Tibial artery (tissue), 4 donors: ENCODE measurements at regions of chr1 and their contacts with region 1.

Region 1: GRCh38 chr1:175035865-175036264 is 12.6 kb upstream of the MRPS14 start:
- DNase-seq: no peak
- H3K4me3 ChIP-seq: no peak overlapping the region
- H3K27ac ChIP-seq: no peak overlapping the region
- H3K4me1 ChIP-seq: no peaks in the 10 kb centered on the region
- H3K27me3 ChIP-seq: no peaks in the 10 kb centered on the region
- CTCF ChIP-seq: no peak

Region 2: DNA sequence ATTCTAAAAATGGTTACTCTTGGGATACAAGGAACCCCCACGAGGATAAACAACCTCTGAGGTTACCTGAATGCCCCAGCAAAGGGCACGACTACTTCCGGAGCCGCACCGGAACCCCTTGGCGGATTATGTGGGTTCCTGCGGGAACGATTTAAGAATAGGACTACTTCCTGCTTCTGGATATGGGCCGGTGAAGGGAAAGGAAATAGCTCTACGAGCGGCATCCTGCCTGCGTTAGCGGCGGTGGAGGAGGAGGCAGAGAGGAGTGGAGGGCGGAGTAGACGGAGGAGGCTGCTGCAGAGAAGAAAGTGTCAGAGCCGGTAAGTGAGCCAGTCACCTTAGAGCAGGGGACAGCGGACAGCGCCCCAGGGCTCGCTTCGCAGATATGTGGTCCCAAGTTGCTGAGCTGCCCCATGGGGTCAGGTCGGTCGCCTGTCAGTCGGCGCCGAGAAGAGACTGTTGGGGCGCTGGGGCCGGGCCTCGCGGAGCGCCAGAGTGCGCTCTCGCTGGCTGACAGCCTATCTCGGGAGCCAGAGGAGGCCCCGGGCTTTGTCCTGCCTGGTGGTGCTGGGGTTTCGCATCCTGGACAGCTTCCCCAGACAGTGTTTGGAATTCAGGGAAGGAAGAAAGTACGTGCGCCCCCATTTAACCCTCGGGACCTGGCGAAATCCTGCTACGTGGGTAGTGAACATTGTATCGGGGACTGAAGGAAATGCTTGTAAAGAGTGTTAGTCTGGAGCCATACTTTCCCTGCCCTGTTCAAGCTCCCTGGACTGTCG is 1320.9 kb before region 1 on chr1 and contains the start of gene KLHL20:
- intact Hi-C with region 1: no loop called
- DNase-seq: peak; percentile 80 to 87
- H3K4me3 ChIP-seq: peak within 1 kb of the TSS; percentile 84 to 96
- H3K27ac ChIP-seq: peak within 1 kb of the TSS; percentile 93 to 95
- H3K4me1 ChIP-seq: peaks cover 0 to 23% (median 13%) of the 10 kb centered on the region in 4 donors
- H3K27me3 ChIP-seq: peaks cover 0 to 5% of the 10 kb centered on the region in 2 donors
- CTCF ChIP-seq: no peak

Region 3: GRCh38 chr1:174743654-174744561 is 292.0 kb before region 1 on chr1:
- intact Hi-C with region 1: no loop called
- DNase-seq: no peak
- H3K4me3 ChIP-seq: no peak overlapping the region
- H3K27ac ChIP-seq: no peak overlapping the region
- H3K4me1 ChIP-seq: no peaks in the 10 kb centered on the region
- H3K27me3 ChIP-seq: no peaks in the 10 kb centered on the region
- CTCF ChIP-seq: peak; percentile 36 to 42

Region 4: DNA sequence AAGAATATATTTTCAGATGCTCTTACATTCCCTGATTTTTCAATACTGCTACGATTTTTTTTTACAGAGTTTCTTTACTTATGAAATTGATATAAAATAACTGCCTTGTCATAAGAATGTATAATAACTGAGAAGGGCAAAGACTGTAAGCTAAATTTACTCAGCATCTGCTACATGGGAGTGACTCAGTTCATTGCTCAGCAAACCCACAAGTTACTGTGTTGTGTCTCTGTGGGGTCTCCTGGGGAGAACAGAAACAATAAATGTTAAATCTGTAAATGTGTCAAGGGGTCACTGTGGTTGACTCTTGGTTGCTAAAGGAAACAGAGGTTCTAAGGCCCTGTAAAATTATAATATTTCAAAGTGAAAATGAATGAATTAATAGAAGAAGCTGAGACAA is 246.5 kb before region 1 on chr1:
- intact Hi-C with region 1: no loop called
- DNase-seq: no peak
- H3K4me3 ChIP-seq: no peak overlapping the region
- H3K27ac ChIP-seq: peak overlapping the region; percentile 26 to 57
- H3K4me1 ChIP-seq: peaks cover 0 to 26% (median 4%) of the 10 kb centered on the region in 4 donors
- H3K27me3 ChIP-seq: no peaks in the 10 kb centered on the region
- CTCF ChIP-seq: no peak

Region 5: DNA sequence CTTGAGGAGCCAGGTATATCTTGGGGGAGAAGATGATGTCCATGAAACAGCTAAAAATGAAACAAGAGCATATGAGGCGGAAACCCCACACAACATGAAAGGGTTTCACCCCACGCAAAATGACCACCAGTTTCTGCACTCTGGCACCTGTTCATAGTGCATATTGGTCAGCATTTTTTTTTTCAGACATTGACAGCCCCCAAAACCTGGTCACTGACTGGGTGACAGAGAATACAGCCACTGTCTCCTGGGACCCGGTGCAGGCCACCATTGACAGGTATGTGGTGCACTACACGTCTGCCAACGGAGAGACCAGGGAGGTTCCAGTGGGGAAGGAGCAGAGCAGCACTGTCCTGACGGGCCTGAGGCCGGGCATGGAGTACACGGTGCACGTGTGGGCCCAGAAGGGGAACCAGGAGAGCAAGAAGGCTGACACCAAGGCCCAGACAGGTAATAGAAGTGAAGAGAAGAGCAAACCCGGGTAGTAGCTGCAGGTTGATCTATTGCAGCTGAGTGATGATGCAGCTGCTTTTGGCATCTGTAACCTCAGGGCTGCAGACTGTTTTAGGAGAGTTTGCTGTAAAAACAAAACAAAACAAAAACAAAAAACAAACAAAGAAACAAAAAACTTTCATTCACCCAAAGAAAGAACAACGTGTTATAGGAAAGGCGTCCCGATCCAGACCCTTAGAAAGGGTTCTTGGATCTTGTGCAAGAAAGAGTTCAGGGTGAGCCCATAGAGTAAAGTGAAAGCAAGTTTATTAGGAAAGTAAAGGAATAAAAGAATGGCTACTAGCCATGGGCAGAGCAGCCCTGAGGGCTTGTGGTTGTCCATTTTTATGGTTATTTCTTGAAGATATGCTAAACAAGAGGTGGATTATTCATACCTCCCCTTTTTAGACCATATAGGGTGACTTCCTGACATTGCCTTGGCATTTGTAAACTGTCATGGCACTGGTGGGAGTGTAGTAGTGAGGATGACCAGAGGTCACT is 82.8 kb after region 1 on chr1:
- intact Hi-C with region 1: loop called (anchors 5 kb)
- DNase-seq: no peak
- H3K4me3 ChIP-seq: no peak overlapping the region
- H3K27ac ChIP-seq: no peak overlapping the region
- H3K4me1 ChIP-seq: no peaks in the 10 kb centered on the region
- H3K27me3 ChIP-seq: no peaks in the 10 kb centered on the region
- CTCF ChIP-seq: no peak

Region 6: DNA sequence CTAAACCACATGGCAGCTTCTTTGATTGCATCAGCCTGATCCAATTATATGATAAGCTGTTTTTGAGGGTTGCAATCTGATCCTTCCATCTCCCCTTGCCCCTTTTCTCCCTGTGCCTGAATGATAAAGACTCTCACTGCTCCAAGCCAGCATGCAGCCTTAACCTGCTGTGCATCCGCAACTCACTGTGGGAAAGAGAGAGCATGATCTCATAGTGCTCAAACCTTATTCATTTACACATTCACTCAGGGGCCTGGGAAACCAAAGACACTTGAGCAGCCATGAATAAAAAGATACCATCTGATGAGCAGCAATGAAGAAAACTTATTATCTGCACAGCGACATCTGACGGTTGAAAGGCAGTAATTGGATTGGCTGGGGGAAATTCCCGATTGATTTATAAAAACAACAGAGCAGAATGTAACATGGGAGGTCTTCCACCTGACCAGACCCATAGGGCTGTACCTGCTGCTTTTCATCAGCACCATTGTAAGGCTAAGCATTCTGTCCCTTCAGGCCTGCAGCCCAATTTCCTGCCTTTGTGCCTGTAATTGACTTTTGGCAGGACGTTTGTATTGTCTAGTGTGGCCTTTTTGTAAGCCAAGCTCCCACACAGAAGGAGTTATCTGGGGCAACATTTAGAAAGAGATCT is 94.3 kb after region 1 on chr1:
- intact Hi-C with region 1: loop called (anchors 5 kb)
- DNase-seq: no peak
- H3K4me3 ChIP-seq: no peak overlapping the region
- H3K27ac ChIP-seq: no peak overlapping the region
- H3K4me1 ChIP-seq: peaks cover 0 to 33% (median 11%) of the 10 kb centered on the region in 4 donors
- H3K27me3 ChIP-seq: no peaks in the 10 kb centered on the region
- CTCF ChIP-seq: no peak

Region 7: GRCh38 chr1:175174309-175175165 is 138.7 kb after region 1 on chr1:
- intact Hi-C with region 1: no loop called
- DNase-seq: no peak
- H3K4me3 ChIP-seq: no peak overlapping the region
- H3K27ac ChIP-seq: no peak overlapping the region
- H3K4me1 ChIP-seq: no peaks in the 10 kb centered on the region
- H3K27me3 ChIP-seq: no peaks in the 10 kb centered on the region
- CTCF ChIP-seq: no peak

Region 8: GRCh38 chr1:175319418-175320230 is 283.8 kb after region 1 on chr1:
- intact Hi-C with region 1: loop called (anchors 10 kb)
- DNase-seq: peak; percentile 71 to 84
- H3K4me3 ChIP-seq: no peak overlapping the region
- H3K27ac ChIP-seq: no peak overlapping the region
- H3K4me1 ChIP-seq: peaks cover 0 to 11% (median 3%) of the 10 kb centered on the region in 4 donors
- H3K27me3 ChIP-seq: no peaks in the 10 kb centered on the region
- CTCF ChIP-seq: peak; percentile 84 to 87